Spleen (tissue), 13 donors: ENCODE measurements at regions of chr10 and their contacts with region 1.

Region 1: DNA sequence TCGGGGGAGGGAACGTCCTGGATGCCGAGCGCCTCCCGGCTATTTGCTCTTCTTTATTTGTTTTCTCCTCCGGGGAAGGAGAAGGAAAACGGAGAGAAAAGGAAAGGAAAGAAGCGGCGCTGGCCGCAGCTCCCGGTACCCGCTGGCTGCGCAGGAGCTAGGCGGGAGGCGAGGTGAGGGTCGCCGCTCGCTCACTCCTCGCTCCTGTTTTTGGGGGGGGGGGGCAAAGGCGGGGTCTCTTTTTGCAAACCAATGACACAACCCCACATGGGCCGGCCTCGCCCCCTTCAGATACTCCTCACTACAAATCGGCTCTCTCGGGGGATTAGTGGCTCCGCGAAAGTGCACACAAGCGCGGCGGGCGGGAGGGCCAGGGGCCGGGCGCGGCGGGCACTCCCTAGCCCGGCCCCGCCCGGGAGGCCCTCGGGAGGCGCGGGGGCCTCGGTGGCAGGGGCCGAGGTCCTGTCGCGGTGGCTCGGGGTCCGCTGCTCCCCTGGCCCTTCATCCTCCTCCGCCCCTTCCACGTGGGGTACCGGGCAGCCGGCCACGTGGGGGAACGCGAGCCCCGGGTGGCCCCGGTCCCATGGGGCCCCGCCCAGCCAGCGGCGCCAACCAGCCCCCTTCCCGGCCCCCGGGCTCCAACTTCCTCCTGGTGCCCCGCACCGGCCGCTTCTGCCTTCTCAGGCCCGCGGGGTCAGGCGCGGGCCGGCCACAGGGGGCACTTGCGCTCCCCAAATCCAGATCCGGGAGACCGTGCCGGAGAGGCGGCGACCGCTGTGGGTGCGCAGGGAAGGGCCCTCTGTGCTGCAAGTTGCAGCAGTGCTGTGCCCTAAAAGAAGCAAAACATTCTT is 718 bp upstream of the CTBP2 start:
- DNase-seq: peak; percentile 92
- H3K4me3 ChIP-seq: peak overlapping the region; percentile 44 to 90 (median 69)
- H3K27ac ChIP-seq: peak overlapping the region; percentile 22 to 97 (median 95)
- H3K4me1 ChIP-seq: peaks cover 0 to 53% (median 36%) of the 10 kb centered on the region in 6 donors
- H3K27me3 ChIP-seq: peaks cover 0 to 74% (median 15%) of the 10 kb centered on the region in 7 donors
- CTCF ChIP-seq: peak in 7 of 11 experiments; percentile 25 to 67 (median 46)
- POLR2A ChIP-seq: no peak

Region 2: DNA sequence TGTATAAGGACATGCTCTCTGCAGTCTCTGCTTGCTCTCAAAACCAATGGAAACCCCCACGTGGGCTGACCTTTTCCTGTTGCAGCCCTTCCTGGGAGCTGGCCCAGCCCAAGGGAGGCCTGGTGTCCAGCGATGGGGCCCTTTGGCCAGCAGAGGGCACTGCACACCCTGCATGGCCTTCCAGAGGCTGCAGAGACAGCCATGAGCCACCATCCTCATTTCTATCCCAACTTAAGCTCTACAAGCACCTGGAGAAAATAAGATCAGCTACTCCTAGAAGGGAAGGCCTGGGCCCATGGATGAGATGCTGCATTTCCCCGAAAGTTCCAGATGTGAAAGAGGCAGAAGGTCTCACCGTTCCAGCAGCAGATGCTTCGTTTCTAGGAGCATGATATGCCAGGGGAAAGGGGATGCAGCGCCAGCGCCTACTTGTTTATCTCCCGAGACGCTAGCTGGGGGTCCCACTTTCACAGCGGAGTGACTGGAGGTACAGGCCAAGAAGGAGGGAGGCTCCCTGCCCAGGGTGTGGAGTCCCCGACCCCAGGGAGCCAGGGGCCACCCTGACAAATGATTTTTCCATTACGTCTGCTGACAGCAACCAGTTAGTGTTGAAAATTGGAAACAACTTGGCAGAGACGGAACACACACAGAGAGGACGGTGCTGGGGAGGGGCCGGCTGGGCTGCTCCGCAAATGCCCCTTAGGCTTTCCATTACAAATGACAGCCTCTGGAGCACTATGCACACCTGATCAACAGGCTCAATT is 112.8 kb before region 1 on chr10:
- intact Hi-C with region 1: loop called (anchors 10 kb)
- DNase-seq: peak; percentile 93
- H3K4me3 ChIP-seq: no peak overlapping the region
- H3K27ac ChIP-seq: peak overlapping the region in 2 of 8 donors; percentile 10 to 26
- H3K4me1 ChIP-seq: peaks cover 0 to 69% (median 49%) of the 10 kb centered on the region in 6 donors
- H3K27me3 ChIP-seq: peaks cover 0 to 43% (median 0%) of the 10 kb centered on the region in 7 donors
- CTCF ChIP-seq: peak; percentile 75 to 95 (median 92)
- POLR2A ChIP-seq: no peak

Region 3: GRCh38 chr10:125337510-125337909 is 176.4 kb after region 1 on chr10:
- intact Hi-C with region 1: loop called (anchors 10 kb)
- DNase-seq: no peak
- H3K4me3 ChIP-seq: no peak overlapping the region
- H3K27ac ChIP-seq: no peak overlapping the region
- H3K4me1 ChIP-seq: no peaks in the 10 kb centered on the region
- H3K27me3 ChIP-seq: peaks cover 0 to 14% (median 0%) of the 10 kb centered on the region in 7 donors
- CTCF ChIP-seq: no peak
- POLR2A ChIP-seq: no peak

Region 4: DNA sequence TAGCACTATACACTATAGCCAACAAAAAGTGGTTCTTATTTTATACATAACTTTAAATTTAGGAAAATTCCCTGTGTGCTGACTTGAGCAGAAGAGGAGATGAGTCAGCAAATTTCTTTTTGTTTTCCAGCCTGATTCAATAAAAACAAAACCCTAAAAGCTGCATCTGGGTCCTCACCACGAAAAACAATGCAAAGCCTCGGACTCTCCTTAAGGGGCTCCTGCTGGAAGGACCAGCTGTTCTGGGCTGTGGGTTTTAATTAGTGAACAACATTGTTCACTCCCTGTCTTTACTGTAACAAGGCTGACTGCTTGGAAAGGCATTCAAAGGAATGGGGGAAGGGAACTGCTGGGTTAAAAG is 987.1 kb after region 1 on chr10:
- intact Hi-C with region 1: no loop called
- DNase-seq: no peak
- H3K4me3 ChIP-seq: no peak overlapping the region
- H3K27ac ChIP-seq: no peak overlapping the region
- H3K4me1 ChIP-seq: no peaks in the 10 kb centered on the region
- H3K27me3 ChIP-seq: no peaks in the 10 kb centered on the region
- CTCF ChIP-seq: no peak
- POLR2A ChIP-seq: no peak